ENCODE measurements at regions of chr6 and their contacts with region 1.

Region 1: DNA sequence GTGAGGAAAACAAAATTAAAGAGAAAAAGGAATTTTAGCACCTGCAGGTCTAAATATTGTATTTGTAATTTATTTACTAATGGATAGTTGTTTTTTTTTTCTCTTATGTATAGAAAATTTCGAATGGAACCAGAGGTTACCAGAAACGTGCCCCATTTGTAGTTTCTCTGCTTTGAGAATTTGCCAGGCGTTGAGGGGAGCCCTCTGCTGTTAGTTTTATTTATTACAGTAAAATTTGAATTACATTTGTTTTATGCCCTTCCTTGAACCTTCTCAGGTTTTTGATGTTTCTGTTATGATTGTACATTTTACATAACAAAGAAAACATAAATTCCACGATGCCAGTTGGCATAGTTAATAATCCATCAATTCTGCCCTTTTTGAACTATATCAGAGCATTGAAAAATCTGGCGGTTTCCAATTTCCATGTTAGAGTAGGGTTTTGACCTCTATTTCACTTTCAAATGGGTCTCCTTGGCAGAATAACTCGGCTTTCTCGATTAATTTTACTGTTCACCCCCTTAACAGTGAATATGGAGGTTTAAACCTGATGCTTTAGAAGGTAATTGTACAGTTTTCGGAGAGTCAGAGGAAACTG is 35.1 kb upstream of the RFPL4B start:
- DNase-seq: peak; percentile 25
- ATAC-seq: no peak
- H3K4me3 Mint-ChIP-seq: no peak overlapping the region
- H3K27ac Mint-ChIP-seq: no peak overlapping the region
- H3K4me1 Mint-ChIP-seq: no peaks in the 10 kb centered on the region
- H3K27me3 Mint-ChIP-seq: peaks cover 11% of the 10 kb centered on the region

Region 2: GRCh38 chr6:112173221-112173804 is 138.7 kb before region 1 on chr6:
- CTCF ChIA-PET with region 1: interaction called, 16 read pairs
- POLR2A ChIA-PET with region 1: no interaction called
- intact Hi-C with region 1: no loop called
- DNase-seq: no peak
- ATAC-seq: no peak
- H3K4me3 Mint-ChIP-seq: no peak overlapping the region
- H3K27ac Mint-ChIP-seq: no peak overlapping the region
- H3K4me1 Mint-ChIP-seq: no peaks in the 10 kb centered on the region
- H3K27me3 Mint-ChIP-seq: peaks cover 23% of the 10 kb centered on the region

Region 3: GRCh38 chr6:112337209-112337638 is 25.2 kb after region 1 on chr6:
- CTCF ChIA-PET with region 1: no interaction called
- POLR2A ChIA-PET with region 1: no interaction called
- intact Hi-C with region 1: no loop called
- DNase-seq: no peak
- ATAC-seq: no peak
- H3K4me3 Mint-ChIP-seq: no peak overlapping the region
- H3K27ac Mint-ChIP-seq: no peak overlapping the region
- H3K4me1 Mint-ChIP-seq: no peaks in the 10 kb centered on the region
- H3K27me3 Mint-ChIP-seq: peaks cover 10% of the 10 kb centered on the region

Measured in activated CD4-positive, alpha-beta T cell treated with anti-CD3 and anti-CD28 coated beads for 36 hours (primary cell).